ENCODE measurements at regions of chr22 and their contacts with region 1.

Region 1: DNA sequence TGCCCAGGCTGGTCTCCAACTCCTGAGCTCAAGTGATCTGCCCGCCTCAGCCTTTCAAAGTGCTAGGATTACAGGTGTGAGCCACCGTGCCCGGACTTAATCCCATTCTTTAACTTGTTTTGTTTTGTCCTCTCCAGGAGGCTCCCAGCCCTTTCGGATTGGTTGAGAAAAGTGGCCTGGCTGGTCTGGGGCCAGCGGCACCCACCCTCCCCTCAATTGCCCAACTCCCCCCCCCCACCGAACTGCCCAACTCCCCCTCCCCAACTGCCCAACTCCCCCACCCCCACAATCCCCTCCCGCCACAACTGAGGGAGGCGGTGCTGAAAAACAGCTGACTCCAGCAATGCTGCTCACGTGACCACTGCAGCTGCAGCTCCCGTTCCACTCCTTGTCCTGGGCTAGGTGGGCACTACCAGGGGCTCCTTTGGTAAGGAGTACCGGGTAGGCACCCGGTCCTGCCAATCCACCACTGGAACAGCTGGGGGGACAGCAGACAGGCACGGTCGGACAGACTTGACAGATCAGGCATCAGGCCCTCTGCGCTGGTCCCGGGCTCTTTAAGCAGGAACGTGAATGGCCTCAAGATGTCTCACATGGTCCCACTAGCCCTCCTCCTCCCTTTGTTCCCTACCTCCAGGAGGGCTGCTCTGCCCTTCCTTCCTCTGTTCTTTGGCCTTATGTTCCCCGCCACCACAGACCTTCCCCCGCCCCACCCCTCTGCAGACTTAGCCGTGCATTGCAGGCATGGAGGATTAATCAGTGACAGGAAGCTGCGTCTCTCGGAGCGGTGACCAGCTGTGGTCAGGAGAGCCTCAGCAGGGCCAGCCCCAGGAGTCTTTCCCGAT is at the start of gene TCN2:
- DNase-seq: peak; percentile 89
- ATAC-seq: peak; percentile 85
- H3K4me3 Mint-ChIP-seq: peak within 1 kb of the TSS; percentile 81
- H3K27ac Mint-ChIP-seq: peak within 1 kb of the TSS; percentile 99
- H3K4me1 Mint-ChIP-seq: peaks cover 40% of the 10 kb centered on the region
- H3K27me3 Mint-ChIP-seq: no peaks in the 10 kb centered on the region
- CTCF ChIP-seq: no peak
- total RNA-seq, gene TCN2: 34.7 to 39.0 TPM (median 36.7 TPM) in 3 replicates

Region 2: GRCh38 chr22:30485362-30485988 is 121.2 kb before region 1 on chr22:
- CTCF ChIA-PET with region 1: interaction called, 11 read pairs
- POLR2A ChIA-PET with region 1: no interaction called
- DNase-seq: peak; percentile 84
- ATAC-seq: peak; percentile 96
- H3K4me3 Mint-ChIP-seq: no peak overlapping the region
- H3K27ac Mint-ChIP-seq: no peak overlapping the region
- H3K4me1 Mint-ChIP-seq: no peaks in the 10 kb centered on the region
- H3K27me3 Mint-ChIP-seq: peaks cover 2% of the 10 kb centered on the region; the same call in 1 of the 2 replicates
- CTCF ChIP-seq: peak; percentile 98

Region 3: GRCh38 chr22:30555282-30556210 is 51.1 kb before region 1 on chr22:
- CTCF ChIA-PET with region 1: interaction called, 14 read pairs
- POLR2A ChIA-PET with region 1: no interaction called
- DNase-seq: peak; percentile 52
- ATAC-seq: peak; percentile 62
- H3K4me3 Mint-ChIP-seq: no peak overlapping the region
- H3K27ac Mint-ChIP-seq: 0 out of 2 replicates have a peak overlapping the region, but pooled peaks have one; percentile 64
- H3K4me1 Mint-ChIP-seq: peaks cover 23% of the 10 kb centered on the region
- H3K27me3 Mint-ChIP-seq: no peaks in the 10 kb centered on the region
- CTCF ChIP-seq: 0 out of 2 replicates have a peak, but pooled peaks have one; percentile 13

Region 4: DNA sequence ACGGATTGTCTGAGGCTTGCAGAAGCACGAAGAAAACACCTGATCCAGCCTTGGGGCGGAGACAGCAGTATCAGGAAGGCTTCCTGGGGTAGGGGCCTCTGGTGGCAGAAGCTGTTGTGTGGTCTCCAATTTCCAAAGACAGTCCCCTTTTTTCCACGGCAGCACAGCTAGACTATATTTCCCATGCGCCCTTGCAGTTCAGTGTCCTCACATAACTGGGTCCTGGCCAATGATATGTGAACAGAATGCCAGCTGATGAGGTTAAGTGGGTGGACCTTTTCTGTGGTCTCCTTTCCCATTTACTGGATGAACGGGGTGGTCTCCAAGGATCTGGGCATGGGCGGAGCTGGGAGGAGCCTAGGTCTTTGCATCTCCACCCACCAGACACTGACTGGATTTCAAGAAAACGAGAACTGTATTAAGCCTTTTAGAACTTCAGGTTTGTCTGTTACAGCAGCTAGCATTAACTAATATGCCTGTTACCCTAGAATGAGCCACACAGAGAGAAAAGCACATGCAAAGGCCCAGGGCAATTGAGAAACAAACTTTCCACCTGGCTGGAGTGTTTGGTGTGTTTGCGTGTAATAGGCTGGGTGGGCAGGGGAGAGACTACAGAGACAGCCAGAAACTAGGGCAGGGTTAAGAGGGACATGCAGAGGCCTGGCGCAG is 38.4 kb before region 1 on chr22:
- CTCF ChIA-PET with region 1: interaction called, 10 read pairs
- POLR2A ChIA-PET with region 1: no interaction called
- DNase-seq: peak; percentile 46
- ATAC-seq: peak; percentile 82
- H3K4me3 Mint-ChIP-seq: no peak overlapping the region
- H3K27ac Mint-ChIP-seq: no peak overlapping the region; the same call in none of the 2 replicates
- H3K4me1 Mint-ChIP-seq: peaks cover 27% of the 10 kb centered on the region
- H3K27me3 Mint-ChIP-seq: no peaks in the 10 kb centered on the region; the same call in none of the 2 replicates
- CTCF ChIP-seq: no peak

Measured in WTC11 (cell line).